ENCODE measurements at regions of chr11 and their contacts with region 1.

Region 1: GRCh38 chr11:36746886-36747710 is 149.1 kb upstream of the RAG2 start:
- DNase-seq: peak; percentile 79
- H3K4me3 Mint-ChIP-seq: no peak overlapping the region
- H3K27ac Mint-ChIP-seq: no peak overlapping the region
- H3K4me1 Mint-ChIP-seq: no peaks in the 10 kb centered on the region
- H3K27me3 Mint-ChIP-seq: peaks cover 9% of the 10 kb centered on the region

Region 2: DNA sequence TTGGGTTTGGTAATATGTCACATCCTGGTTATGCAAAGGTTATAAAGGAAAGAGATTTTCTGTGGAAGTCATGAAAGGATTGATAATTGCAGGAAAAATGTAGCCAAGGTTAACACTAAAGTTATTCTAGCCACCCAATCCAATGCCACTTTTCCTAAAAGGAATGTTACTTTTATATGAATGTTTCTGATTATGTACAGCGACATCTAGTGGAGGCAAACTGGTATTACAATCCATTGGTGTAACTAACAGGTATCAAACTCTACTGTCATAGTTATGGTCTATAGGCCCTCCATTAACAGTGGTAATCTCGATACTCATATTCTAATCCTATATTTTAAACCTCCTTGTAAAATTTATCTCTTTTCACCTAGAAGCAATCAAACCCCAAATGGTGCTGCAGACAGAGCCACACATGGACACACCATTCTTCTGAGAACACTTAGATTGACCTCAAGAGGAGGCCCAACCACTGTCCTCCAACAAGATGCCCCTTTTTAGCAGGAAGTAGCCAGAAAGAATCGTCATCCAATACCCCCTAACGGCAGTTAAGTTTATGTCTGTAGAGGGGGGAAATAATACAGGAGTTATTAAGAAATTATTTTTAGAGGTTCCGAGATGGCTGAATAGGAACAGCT is 74.2 kb before region 1 on chr11:
- intact Hi-C with region 1: loop called (anchors 2 kb)
- DNase-seq: no peak
- H3K4me3 Mint-ChIP-seq: no peak overlapping the region
- H3K27ac Mint-ChIP-seq: no peak overlapping the region
- H3K4me1 Mint-ChIP-seq: no peaks in the 10 kb centered on the region
- H3K27me3 Mint-ChIP-seq: peaks cover 3% of the 10 kb centered on the region

Region 3: GRCh38 chr11:36702330-36703055 is 44.6 kb before region 1 on chr11:
- intact Hi-C with region 1: loop called (anchors 1 kb)
- DNase-seq: no peak
- H3K4me3 Mint-ChIP-seq: no peak overlapping the region
- H3K27ac Mint-ChIP-seq: no peak overlapping the region
- H3K4me1 Mint-ChIP-seq: no peaks in the 10 kb centered on the region
- H3K27me3 Mint-ChIP-seq: peaks cover 23% of the 10 kb centered on the region

Region 4: DNA sequence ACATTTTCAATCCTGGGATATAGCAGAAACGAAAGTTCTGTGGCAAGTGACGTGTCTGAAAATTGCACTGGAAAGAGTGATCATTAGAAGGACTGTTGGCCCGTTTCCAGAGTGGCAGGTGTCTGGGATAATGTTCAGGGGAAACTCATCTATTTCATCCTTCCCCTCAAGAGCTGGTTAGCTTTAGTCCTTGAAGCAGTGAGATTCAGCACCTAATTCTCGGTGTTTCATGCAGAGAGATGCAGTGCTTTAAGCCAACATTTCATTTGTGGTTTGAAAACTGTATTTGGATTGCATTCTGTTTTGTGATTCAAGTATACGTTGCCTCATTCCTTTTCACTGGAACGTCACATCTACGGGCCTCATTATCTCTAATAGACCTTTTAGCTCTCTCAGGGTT is 56.0 kb after region 1 on chr11:
- intact Hi-C with region 1: no loop called
- DNase-seq: no peak
- H3K4me3 Mint-ChIP-seq: no peak overlapping the region
- H3K27ac Mint-ChIP-seq: no peak overlapping the region
- H3K4me1 Mint-ChIP-seq: no peaks in the 10 kb centered on the region
- H3K27me3 Mint-ChIP-seq: no peaks in the 10 kb centered on the region

Measured in activated T-helper 1 cell treated with anti-CD3 and anti-CD28 coated beads, Interleukin-12 subunit alpha, Interleukin-12 subunit beta, Interleukin-2, Interleukin-4 antibody, amounts not matched to agents 30 ng/mL and 10 ng/mL and 1 ng/mL, durations not matched to agents 14 hours and 24 hours and 36 hours (primary cell).